ENCODE measurements at regions of chr15 and their contacts with region 1.

Region 1: DNA sequence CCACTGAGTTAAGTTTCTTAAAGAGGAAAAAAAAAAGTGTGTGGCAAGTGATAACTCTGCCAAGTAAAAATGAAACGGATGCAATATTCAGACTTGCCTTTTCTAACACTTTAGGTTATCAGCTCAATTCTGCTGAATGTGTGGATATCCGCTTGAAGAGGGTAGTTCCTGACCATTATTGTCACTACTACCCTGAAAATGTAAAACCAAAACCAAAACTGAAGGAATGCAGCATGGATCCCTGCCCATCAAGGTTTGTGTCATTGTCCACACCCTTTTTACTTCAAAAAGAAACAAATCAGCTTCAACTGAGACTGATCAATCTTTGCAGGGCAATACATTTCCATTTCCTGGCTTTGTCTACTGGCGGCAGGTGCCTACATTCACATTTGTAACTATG is 236.1 kb downstream of the ADAMTSL3 start:
- DNase-seq: no peak
- H3K4me3 ChIP-seq: no peak overlapping the region
- H3K4me3 Mint-ChIP-seq: no peak overlapping the region
- H3K27ac ChIP-seq: no peak overlapping the region
- H3K27ac Mint-ChIP-seq: no peak overlapping the region
- H3K4me1 ChIP-seq: no peaks in the 10 kb centered on the region
- H3K4me1 Mint-ChIP-seq: no peaks in the 10 kb centered on the region
- H3K27me3 ChIP-seq: no peaks in the 10 kb centered on the region
- H3K27me3 Mint-ChIP-seq: no peaks in the 10 kb centered on the region
- CTCF ChIP-seq: no peak

Region 2: GRCh38 chr15:83582381-83582780 is 307.6 kb before region 1 on chr15:
- intact Hi-C with region 1: no loop called
- DNase-seq: no peak
- H3K4me3 ChIP-seq: no peak overlapping the region
- H3K4me3 Mint-ChIP-seq: no peak overlapping the region
- H3K27ac ChIP-seq: no peak overlapping the region
- H3K27ac Mint-ChIP-seq: no peak overlapping the region
- H3K4me1 ChIP-seq: no peaks in the 10 kb centered on the region
- H3K4me1 Mint-ChIP-seq: no peaks in the 10 kb centered on the region
- H3K27me3 ChIP-seq: no peaks in the 10 kb centered on the region
- H3K27me3 Mint-ChIP-seq: peaks cover 0 to 2% (median 2%) of the 10 kb centered on the region in 3 donors
- CTCF ChIP-seq: no peak

Region 3: DNA sequence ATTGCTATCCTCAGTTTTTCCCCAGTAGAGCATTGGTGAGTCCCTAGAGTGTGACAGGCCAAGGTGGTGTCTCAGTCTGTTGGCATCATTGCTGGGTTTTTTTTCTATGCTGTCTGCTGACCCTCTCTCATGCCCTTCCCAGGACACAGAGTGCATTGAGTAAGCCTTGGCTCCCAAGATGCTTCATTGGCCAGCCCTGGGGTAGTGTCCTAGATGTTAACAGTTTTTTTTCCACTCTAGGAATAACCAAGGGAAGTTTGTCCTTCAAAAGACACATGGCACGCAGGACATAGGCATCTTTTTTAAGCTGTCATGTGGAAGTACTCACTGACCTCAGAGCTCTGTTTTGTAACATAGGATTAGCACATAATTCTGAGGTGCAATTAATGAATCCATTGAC is 216.6 kb before region 1 on chr15:
- intact Hi-C with region 1: no loop called
- DNase-seq: no peak
- H3K4me3 ChIP-seq: no peak overlapping the region
- H3K4me3 Mint-ChIP-seq: no peak overlapping the region
- H3K27ac ChIP-seq: no peak overlapping the region
- H3K27ac Mint-ChIP-seq: no peak overlapping the region
- H3K4me1 ChIP-seq: no peaks in the 10 kb centered on the region
- H3K4me1 Mint-ChIP-seq: no peaks in the 10 kb centered on the region
- H3K27me3 ChIP-seq: no peaks in the 10 kb centered on the region
- H3K27me3 Mint-ChIP-seq: peaks cover 0 to 6% (median 3%) of the 10 kb centered on the region in 3 donors
- CTCF ChIP-seq: no peak

Region 4: DNA sequence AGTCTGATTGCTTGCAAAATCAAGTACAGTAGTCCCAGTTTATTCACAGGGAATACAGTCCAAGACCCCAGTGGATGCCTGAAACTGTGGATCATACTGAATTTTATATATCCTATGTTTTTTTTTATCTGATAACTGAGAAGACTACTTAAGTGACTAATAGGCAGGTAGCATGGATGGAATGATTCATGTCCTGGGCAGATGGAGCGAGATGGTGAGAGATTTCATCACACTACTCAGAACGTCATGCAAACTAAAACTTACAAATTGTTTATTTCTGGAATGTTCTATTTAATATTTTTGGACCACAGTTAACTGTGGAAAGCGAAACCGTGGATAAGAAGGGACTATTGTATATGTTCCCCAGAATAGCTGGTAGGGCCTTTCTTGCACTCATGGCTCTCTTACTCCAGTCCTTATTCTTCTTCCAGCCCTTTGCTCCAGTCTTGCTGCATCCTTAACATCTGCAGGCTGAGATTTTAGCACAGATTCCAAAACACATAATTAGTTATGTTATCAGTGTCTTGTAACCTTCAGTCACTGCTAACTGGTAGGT is 53.9 kb after region 1 on chr15:
- intact Hi-C with region 1: loop called in 1 of 2 experiments (anchors 10 kb)
- DNase-seq: no peak
- H3K4me3 ChIP-seq: no peak overlapping the region
- H3K4me3 Mint-ChIP-seq: no peak overlapping the region
- H3K27ac ChIP-seq: no peak overlapping the region
- H3K27ac Mint-ChIP-seq: no peak overlapping the region
- H3K4me1 ChIP-seq: no peaks in the 10 kb centered on the region
- H3K4me1 Mint-ChIP-seq: no peaks in the 10 kb centered on the region
- H3K27me3 ChIP-seq: no peaks in the 10 kb centered on the region
- H3K27me3 Mint-ChIP-seq: peaks cover 0 to 4% (median 0%) of the 10 kb centered on the region in 3 donors
- CTCF ChIP-seq: no peak